Right ventricle myocardium inferior (tissue), 1 donor: ENCODE measurements at regions of chr9 and their contacts with region 1.

Region 1: GRCh38 chr9:109918339-109919163 is 138.6 kb downstream of the PALM2AKAP2 start:
- DNase-seq: no peak
- ATAC-seq: peak; percentile 48

Region 2: GRCh38 chr9:109953813-109954497 is 35.4 kb after region 1 on chr9:
- intact Hi-C with region 1: loop called (anchors 5 kb)
- DNase-seq: no peak
- ATAC-seq: no peak

Region 3: GRCh38 chr9:110031511-110032173 is 113.1 kb after region 1 on chr9:
- intact Hi-C with region 1: loop called (anchors 5 kb)
- DNase-seq: no peak
- ATAC-seq: no peak